ENCODE measurements at regions of chr20 and their contacts with region 1.

Region 1: GRCh38 chr20:3242167-3242692 is 3.2 kb upstream of the SLC4A11 start:
- DNase-seq: no peak
- ATAC-seq: no peak

Region 2: GRCh38 chr20:2900845-2901592 is 341.2 kb before region 1 on chr20:
- intact Hi-C with region 1: no loop called
- DNase-seq: no peak
- ATAC-seq: no peak

Region 3: DNA sequence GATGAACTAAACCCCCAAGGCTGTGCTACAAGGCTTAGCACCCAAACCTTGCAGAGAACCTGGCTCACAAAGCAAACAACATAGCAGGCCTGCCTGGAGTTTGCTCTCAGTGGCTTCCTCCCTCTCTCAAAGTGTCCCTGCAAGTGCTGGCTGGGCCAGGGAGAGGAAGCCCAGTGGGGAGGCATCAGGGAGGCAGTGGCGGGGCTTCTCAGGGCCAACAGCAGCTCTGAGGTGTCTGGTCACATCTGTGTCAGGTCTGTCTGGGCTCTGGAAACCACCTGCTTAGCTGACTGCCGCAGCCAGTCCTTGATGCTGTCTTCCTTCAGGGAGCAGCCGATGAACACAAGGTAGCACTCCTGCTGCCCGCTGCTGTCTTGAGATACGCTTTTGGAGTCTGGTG is 13.5 kb after region 1 on chr20:
- intact Hi-C with region 1: loop called (anchors 1 kb)
- DNase-seq: no peak
- ATAC-seq: no peak

Region 4: DNA sequence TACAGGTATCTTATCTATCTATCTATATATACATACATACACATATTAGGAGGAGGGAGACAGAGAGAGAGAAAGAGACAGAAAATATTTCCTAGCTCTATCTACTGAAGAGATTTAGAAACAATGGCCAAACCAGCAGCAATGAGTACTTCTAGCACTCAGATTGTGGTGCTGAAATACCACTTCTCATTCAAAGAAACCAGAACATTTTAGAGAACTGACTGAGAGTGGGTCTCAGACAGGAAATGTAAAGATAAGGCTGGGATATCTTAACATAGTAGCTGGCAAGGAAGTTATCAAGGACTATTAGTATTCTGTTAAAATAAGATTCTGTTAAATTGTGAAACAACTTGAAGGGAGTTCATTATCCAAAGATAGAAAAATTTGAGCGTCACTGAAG is 108.2 kb after region 1 on chr20:
- intact Hi-C with region 1: no loop called
- DNase-seq: no peak
- ATAC-seq: no peak